Naive thymus-derived CD4-positive, alpha-beta T cell (primary cell): ENCODE measurements at regions of chr22 and their contacts with region 1.

Region 1: GRCh38 chr22:42444077-42444904 is 12.1 kb upstream of the NFAM1 start:
- DNase-seq: peak; percentile 61 to 88 (median 82)
- ATAC-seq: peak; percentile 92
- H3K4me3 ChIP-seq: peak overlapping the region; percentile 68
- H3K4me3 Mint-ChIP-seq: peak overlapping the region; percentile 77 to 94 (median 84)
- H3K27ac ChIP-seq: peak overlapping the region; percentile 71
- H3K27ac Mint-ChIP-seq: peak overlapping the region; percentile 88 to 98 (median 94)
- H3K4me1 ChIP-seq: peaks cover 15% of the 10 kb centered on the region in 2 donors
- H3K4me1 Mint-ChIP-seq: peaks cover 9 to 34% (median 26%) of the 10 kb centered on the region in 7 donors
- H3K27me3 ChIP-seq: no peaks in the 10 kb centered on the region
- H3K27me3 Mint-ChIP-seq: peaks cover 0 to 3% (median 0%) of the 10 kb centered on the region in 5 donors

Region 2: GRCh38 chr22:41688365-41689211 is 755.7 kb before region 1 on chr22 and contains the start of gene SNU13:
- CTCF ChIA-PET with region 1: no interaction called
- POLR2A ChIA-PET with region 1: no interaction called
- intact Hi-C with region 1: loop called in 1 of 2 experiments (anchors 5 kb)
- DNase-seq: peak; percentile 79 to 94 (median 92)
- ATAC-seq: peak; percentile 97
- H3K4me3 ChIP-seq: peak within 1 kb of the TSS; percentile 98
- H3K4me3 Mint-ChIP-seq: peak within 1 kb of the TSS; percentile 90 to 100 (median 96)
- H3K27ac ChIP-seq: peak within 1 kb of the TSS; percentile 95
- H3K27ac Mint-ChIP-seq: peak within 1 kb of the TSS; percentile 94 to 100 (median 99)
- H3K4me1 ChIP-seq: peaks cover 12 to 13% of the 10 kb centered on the region in 2 donors
- H3K4me1 Mint-ChIP-seq: peaks cover 18 to 51% (median 37%) of the 10 kb centered on the region in 7 donors
- H3K27me3 ChIP-seq: no peaks in the 10 kb centered on the region
- H3K27me3 Mint-ChIP-seq: no peaks in the 10 kb centered on the region
- total RNA-seq, gene SNU13: 117 to 180 (median 122) TPM

Region 3: DNA sequence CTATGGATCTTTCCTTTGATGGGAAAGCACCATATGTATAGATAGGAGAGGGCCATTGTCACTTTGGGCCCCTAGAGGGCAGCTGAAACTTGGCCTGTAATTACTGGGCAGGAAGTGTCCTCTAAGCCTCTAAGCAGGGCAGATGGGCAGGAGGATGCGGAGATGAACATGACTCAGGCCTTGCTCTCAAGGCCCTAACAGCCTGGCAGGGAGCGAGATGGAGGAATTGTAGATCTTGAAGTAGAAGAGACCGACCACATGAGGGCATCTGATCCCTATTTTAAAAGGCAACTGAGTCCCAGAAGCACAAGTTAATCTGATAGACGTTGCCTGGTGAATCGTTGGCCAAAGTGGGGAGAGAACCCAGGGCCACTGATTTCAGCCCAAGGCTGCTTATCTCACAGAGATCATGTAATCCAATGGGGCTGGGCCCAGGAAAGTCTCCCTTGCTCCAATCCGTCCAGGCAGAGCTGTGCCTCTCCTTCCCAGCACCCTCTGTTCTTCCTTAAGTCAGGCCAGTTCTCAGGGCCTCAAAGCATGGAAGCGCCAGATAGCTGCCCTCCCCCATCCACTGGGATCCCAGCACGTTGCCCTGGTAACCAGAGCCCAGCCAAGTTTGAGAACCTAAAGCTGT is 477.6 kb before region 1 on chr22:
- CTCF ChIA-PET with region 1: interaction called, 6 read pairs
- POLR2A ChIA-PET with region 1: no interaction called
- intact Hi-C with region 1: loop called (anchors 2 kb)
- DNase-seq: peak in 6 of 9 donors; percentile 20 to 59 (median 48)
- ATAC-seq: peak; percentile 84
- H3K4me3 ChIP-seq: no peak overlapping the region
- H3K4me3 Mint-ChIP-seq: no peak overlapping the region
- H3K27ac ChIP-seq: no peak overlapping the region
- H3K27ac Mint-ChIP-seq: peak overlapping the region in 1 of 9 donors; percentile 72
- H3K4me1 ChIP-seq: no peaks in the 10 kb centered on the region
- H3K4me1 Mint-ChIP-seq: peaks cover 0 to 9% (median 0%) of the 10 kb centered on the region in 7 donors
- H3K27me3 ChIP-seq: no peaks in the 10 kb centered on the region
- H3K27me3 Mint-ChIP-seq: peaks cover 0 to 9% (median 0%) of the 10 kb centered on the region in 5 donors

Region 4: GRCh38 chr22:42169055-42169469 is 275.2 kb before region 1 on chr22:
- CTCF ChIA-PET with region 1: interaction called, 7 read pairs
- POLR2A ChIA-PET with region 1: no interaction called
- intact Hi-C with region 1: loop called in 1 of 2 experiments (anchors 2 kb)
- DNase-seq: peak; percentile 36 to 77 (median 60)
- ATAC-seq: peak; percentile 89
- H3K4me3 ChIP-seq: no peak overlapping the region
- H3K4me3 Mint-ChIP-seq: no peak overlapping the region
- H3K27ac ChIP-seq: no peak overlapping the region
- H3K27ac Mint-ChIP-seq: peak overlapping the region in 1 of 9 donors; percentile 31
- H3K4me1 ChIP-seq: peaks cover 0 to 15% of the 10 kb centered on the region in 2 donors
- H3K4me1 Mint-ChIP-seq: peaks cover 13 to 39% (median 33%) of the 10 kb centered on the region in 7 donors
- H3K27me3 ChIP-seq: no peaks in the 10 kb centered on the region
- H3K27me3 Mint-ChIP-seq: no peaks in the 10 kb centered on the region

Region 5: DNA sequence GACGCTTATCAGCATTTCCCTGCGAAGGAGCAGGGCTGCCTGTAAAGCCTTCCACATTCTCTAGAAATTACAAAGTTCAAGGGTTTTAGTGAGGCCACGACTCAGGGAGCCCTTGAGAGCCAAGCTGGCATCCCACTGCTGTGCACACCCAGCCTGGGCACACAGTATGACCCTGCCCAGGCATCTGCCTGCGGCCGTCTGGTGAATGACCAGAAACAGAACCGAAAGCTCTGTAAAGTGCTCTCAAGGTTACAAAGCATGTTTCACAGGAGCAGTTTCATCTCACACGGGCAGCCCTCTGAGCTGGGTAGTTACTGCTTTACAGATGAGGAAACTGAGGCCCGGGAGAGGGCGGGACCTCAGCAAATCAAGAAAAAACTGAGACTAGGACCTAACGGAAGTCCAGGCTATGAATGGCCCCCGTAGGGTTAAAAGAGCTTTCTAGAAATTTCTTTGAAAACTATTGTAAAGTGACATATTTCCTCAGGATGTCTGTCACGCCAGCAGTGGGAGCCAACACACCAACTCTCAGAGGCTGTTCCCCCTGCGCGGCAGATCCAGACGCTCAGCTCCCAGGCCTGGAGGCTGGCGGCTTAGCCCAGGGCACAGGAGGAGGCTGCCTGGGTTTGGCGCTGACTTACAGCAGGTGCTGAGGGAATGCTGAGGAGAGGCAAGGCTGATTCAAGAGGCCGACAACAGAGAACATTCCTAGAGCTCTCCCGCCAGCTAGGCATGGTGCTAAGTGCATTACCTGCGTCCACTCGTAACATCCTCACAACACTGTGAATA is 166.1 kb before region 1 on chr22:
- CTCF ChIA-PET with region 1: interaction called, 10 read pairs
- POLR2A ChIA-PET with region 1: interaction called, 3 read pairs
- intact Hi-C with region 1: no loop called
- DNase-seq: no peak
- ATAC-seq: no peak
- H3K4me3 ChIP-seq: no peak overlapping the region
- H3K4me3 Mint-ChIP-seq: no peak overlapping the region
- H3K27ac ChIP-seq: no peak overlapping the region
- H3K27ac Mint-ChIP-seq: no peak overlapping the region
- H3K4me1 ChIP-seq: no peaks in the 10 kb centered on the region
- H3K4me1 Mint-ChIP-seq: peaks cover 10 to 29% (median 15%) of the 10 kb centered on the region in 7 donors
- H3K27me3 ChIP-seq: no peaks in the 10 kb centered on the region
- H3K27me3 Mint-ChIP-seq: peaks cover 0 to 15% (median 4%) of the 10 kb centered on the region in 5 donors

Region 6: GRCh38 chr22:42353883-42354727 is 90.2 kb before region 1 on chr22:
- CTCF ChIA-PET with region 1: no interaction called
- POLR2A ChIA-PET with region 1: no interaction called
- intact Hi-C with region 1: no loop called
- DNase-seq: no peak
- ATAC-seq: no peak
- H3K4me3 ChIP-seq: no peak overlapping the region
- H3K4me3 Mint-ChIP-seq: no peak overlapping the region
- H3K27ac ChIP-seq: no peak overlapping the region
- H3K27ac Mint-ChIP-seq: peak overlapping the region in 1 of 9 donors; percentile 72
- H3K4me1 ChIP-seq: no peaks in the 10 kb centered on the region
- H3K4me1 Mint-ChIP-seq: peaks cover 0 to 7% (median 0%) of the 10 kb centered on the region in 7 donors
- H3K27me3 ChIP-seq: no peaks in the 10 kb centered on the region
- H3K27me3 Mint-ChIP-seq: peaks cover 0 to 3% (median 0%) of the 10 kb centered on the region in 5 donors

Region 7: GRCh38 chr22:42553475-42554361 is 109.4 kb after region 1 on chr22 and contains the start of gene SERHL2:
- CTCF ChIA-PET with region 1: interaction called, 3 read pairs
- POLR2A ChIA-PET with region 1: no interaction called
- intact Hi-C with region 1: loop called in 1 of 2 experiments (anchors 2 kb)
- DNase-seq: peak; percentile 59 to 92 (median 77)
- ATAC-seq: peak; percentile 97
- H3K4me3 ChIP-seq: peak within 1 kb of the TSS; percentile 77
- H3K4me3 Mint-ChIP-seq: peak within 1 kb of the TSS; percentile 69 to 92 (median 84)
- H3K27ac ChIP-seq: peak within 1 kb of the TSS; percentile 47
- H3K27ac Mint-ChIP-seq: peak within 1 kb of the TSS in 6 of 9 donors; percentile 30 to 55 (median 48)
- H3K4me1 ChIP-seq: peaks cover 0 to 4% of the 10 kb centered on the region in 2 donors
- H3K4me1 Mint-ChIP-seq: peaks cover 0 to 16% (median 9%) of the 10 kb centered on the region in 7 donors
- H3K27me3 ChIP-seq: no peaks in the 10 kb centered on the region
- H3K27me3 Mint-ChIP-seq: peaks cover 0 to 4% (median 0%) of the 10 kb centered on the region in 5 donors
- total RNA-seq, gene SERHL2: 0.27 to 1.0 (median 0.82) TPM in 4 of 5 experiments, not detected in the other